GM12878 (cell line): ENCODE measurements at regions of chr5 and their contacts with region 1.

Region 1: DNA sequence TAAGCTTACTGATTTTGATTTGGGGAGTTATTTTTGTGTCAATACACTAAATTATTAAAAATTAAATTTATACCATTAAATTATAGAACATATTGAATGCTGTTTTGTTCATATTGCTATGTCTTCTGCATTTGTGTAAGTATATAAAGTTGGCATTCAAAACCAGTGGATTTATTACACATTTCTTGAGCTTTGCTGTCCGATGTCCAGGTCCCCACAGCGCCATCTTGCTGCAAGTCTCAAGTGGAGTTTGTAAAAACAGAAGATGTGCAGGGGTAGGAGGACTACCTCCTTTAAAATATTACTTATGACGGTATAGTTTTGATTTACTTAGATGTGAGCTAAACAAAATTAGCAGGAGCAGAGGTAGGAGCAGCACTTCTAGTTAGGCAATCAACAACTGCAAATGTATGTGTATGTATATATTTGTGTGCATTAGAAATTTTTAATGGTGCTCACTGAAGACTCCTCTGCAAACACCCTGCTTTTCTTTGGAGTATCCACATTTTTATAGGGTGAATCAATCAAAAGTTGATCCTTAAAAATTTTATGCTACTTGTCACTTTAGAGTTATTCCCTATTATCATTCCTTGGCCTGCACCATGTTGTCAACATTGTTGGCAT is 37.4 kb downstream of the CPEB4 start:
- DNase-seq: no peak
- ATAC-seq: peak; percentile 75
- H3K4me3 ChIP-seq: no peak overlapping the region
- H3K27ac ChIP-seq: peak overlapping the region; percentile 32; the same call in 1 of the 2 replicates
- H3K4me1 ChIP-seq: peaks cover 21% of the 10 kb centered on the region
- H3K27me3 ChIP-seq: no peaks in the 10 kb centered on the region
- CTCF ChIP-seq: peak; percentile 60 to 70 (median 63)
- EP300 ChIP-seq: no peak
- POLR2A ChIP-seq: no peak
- RAD21 ChIP-seq: peak; percentile 76

Region 2: DNA sequence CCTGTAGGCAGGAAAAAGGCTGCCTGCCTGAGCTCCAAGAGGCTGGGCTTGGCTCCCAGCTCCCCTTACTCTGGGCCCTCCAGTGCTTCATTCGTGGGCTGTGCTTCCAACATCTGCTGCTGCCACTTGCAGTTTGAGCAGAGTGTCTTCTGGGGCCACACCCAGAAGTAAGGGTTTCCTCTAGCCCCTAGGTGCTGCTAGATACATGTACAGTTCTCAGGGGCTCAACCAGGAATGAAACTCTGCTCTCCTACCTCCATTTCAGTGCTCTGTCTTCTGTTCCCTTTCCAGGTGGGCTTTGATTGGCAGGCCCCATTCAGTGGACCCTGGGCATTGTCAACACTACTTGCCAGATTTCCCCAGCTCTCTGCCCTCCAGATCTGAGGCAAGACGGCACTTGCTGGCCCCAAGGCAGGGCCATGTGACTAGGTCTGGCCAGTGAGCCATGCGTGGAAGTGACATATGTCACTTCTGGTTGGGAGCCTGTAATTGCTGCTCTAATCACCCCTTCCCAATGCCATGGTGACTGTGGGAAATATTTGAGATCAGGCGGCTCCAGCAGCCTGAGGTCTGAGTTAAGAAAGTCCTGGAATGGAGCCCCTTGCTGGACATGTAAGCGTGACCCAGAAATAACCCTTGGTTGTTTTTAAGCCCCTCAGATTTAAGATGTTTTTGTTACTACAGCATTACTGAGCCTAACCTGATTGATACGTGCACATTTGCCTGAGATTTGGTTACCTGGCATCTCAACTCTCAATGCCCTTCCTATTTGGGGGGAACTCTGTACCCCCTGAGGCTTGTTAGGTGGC is 299.7 kb before region 1 on chr5:
- CTCF ChIA-PET with region 1: interaction called, 267 read pairs
- POLR2A ChIA-PET with region 1: interaction called, 3 read pairs
- RAD21 ChIA-PET with region 1: interaction called, 58 read pairs
- SMC1A ChIA-PET with region 1: interaction called, 199 read pairs
- in situ Hi-C with region 1: loop called (anchors 5 kb)
- intact Hi-C with region 1: no loop called
- DNase-seq: no peak
- ATAC-seq: peak; percentile 81
- H3K4me3 ChIP-seq: no peak overlapping the region
- H3K27ac ChIP-seq: no peak overlapping the region
- H3K4me1 ChIP-seq: peaks cover 9% of the 10 kb centered on the region
- H3K27me3 ChIP-seq: no peaks in the 10 kb centered on the region
- CTCF ChIP-seq: peak; percentile 60 to 71 (median 61)
- EP300 ChIP-seq: no peak
- POLR2A ChIP-seq: no peak
- RAD21 ChIP-seq: peak; percentile 85

Region 3: DNA sequence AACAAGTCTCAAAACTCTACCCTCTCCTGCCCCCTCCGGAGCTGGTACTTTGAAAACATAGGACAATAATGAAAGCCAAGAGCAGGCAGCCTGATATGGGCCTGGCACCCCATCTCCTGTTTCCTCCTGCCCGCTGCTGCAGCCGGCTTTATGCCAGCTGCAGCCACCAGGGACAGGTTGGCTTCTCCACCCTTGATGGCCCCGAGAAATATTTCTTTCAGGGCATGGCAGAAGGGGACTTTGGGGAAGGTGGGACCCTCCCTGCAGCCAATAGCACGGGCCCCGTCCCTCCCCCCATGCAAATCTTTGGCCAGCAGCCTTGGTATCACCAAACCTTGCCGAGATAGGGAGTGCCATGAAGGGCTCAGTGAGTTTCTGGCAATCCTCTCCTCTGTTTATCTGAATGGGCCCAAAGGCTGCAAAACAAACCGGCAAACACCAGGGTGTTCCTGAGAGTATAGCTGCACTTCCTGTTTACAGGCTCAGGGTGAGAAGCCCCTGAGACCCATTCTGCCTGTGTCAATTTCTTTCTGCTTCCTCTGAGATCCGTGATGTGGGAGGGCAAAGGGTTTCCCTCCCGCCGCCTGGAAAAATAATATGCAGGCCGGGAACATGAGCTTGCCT is 235.7 kb before region 1 on chr5:
- CTCF ChIA-PET with region 1: interaction called, 3 read pairs
- POLR2A ChIA-PET with region 1: no interaction called
- RAD21 ChIA-PET with region 1: interaction called, 4 read pairs
- SMC1A ChIA-PET with region 1: interaction called, 3 read pairs
- in situ Hi-C with region 1: no loop called
- intact Hi-C with region 1: loop called (anchors 10 kb)
- DNase-seq: no peak
- ATAC-seq: peak; percentile 78
- H3K4me3 ChIP-seq: no peak overlapping the region
- H3K27ac ChIP-seq: peak overlapping the region; percentile 51
- H3K4me1 ChIP-seq: peaks cover 40% of the 10 kb centered on the region
- H3K27me3 ChIP-seq: no peaks in the 10 kb centered on the region
- CTCF ChIP-seq: peak in 2 of 3 experiments; percentile 26 to 33; a peak in 2 of 6 replicates
- EP300 ChIP-seq: no peak
- POLR2A ChIP-seq: no peak; the same call in 1 of the 2 replicates
- RAD21 ChIP-seq: no peak

Region 4: DNA sequence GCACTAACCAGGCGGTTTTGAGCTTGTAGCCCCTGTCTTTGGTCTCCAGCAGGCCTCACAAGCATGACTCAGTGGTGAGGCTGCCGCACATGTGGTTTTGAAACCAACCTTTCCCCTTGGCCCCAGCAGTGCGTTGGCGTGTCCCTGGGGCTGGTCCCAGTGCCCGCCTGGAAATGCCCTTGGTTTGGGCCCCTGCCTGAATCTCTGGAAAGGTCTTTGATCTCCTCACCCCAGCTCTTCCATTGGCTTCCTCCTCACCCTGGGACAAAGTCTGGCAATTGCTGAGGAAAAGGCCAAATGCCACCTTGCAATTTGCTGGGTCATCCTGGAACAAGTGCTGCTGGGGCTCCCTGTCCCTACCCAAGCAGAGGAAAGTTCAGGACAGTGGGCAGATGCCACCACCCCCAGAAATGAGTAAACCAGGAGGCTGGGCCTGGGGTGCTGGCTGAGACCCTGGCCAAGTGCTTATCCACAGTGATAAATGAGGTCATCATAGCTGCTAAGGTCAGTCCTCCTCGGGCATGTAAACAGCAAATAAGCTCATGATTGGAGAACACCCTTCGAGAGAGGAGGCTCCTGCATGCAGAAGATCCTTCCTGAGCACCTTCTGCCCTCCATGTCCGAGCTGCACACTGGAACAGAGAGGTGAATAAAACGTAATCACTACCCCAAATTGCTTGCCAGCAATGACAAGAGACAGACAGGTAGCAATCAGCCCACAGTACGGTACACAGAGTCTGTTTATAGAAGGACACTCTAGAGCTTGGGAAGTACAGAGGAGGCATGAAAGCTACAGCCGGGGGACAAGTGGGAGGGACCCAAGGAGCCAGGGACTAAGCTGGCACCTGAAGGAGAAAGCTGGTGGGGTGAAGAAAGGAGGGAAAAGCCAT is 136.3 kb before region 1 on chr5:
- CTCF ChIA-PET with region 1: interaction called, 53 read pairs
- POLR2A ChIA-PET with region 1: interaction called, 4 read pairs
- RAD21 ChIA-PET with region 1: interaction called, 51 read pairs
- SMC1A ChIA-PET with region 1: interaction called, 90 read pairs
- in situ Hi-C with region 1: no loop called
- intact Hi-C with region 1: no loop called
- DNase-seq: no peak
- ATAC-seq: peak; percentile 23; the same call in 2 of the 3 replicates
- H3K4me3 ChIP-seq: no peak overlapping the region
- H3K27ac ChIP-seq: no peak overlapping the region
- H3K4me1 ChIP-seq: peaks cover 50% of the 10 kb centered on the region
- H3K27me3 ChIP-seq: no peaks in the 10 kb centered on the region
- CTCF ChIP-seq: no peak
- EP300 ChIP-seq: no peak
- POLR2A ChIP-seq: no peak
- RAD21 ChIP-seq: no peak

Region 5: GRCh38 chr5:173887610-173888472 is 37.7 kb before region 1 on chr5 and contains the start of gene CPEB4:
- CTCF ChIA-PET with region 1: interaction called, 104 read pairs
- POLR2A ChIA-PET with region 1: interaction called, 16 read pairs
- RAD21 ChIA-PET with region 1: interaction called, 142 read pairs
- SMC1A ChIA-PET with region 1: interaction called, 361 read pairs
- in situ Hi-C with region 1: no loop called
- intact Hi-C with region 1: loop called (anchors 5 kb)
- DNase-seq: peak; percentile 99
- ATAC-seq: peak; percentile 90
- H3K4me3 ChIP-seq: peak within 1 kb of the TSS; percentile 94
- H3K27ac ChIP-seq: peak within 1 kb of the TSS; percentile 100
- H3K4me1 ChIP-seq: peaks cover 30% of the 10 kb centered on the region
- H3K27me3 ChIP-seq: no peaks in the 10 kb centered on the region
- CTCF ChIP-seq: no peak
- EP300 ChIP-seq: peak in 1 of 2 experiments; percentile 41; a peak in 1 of 4 replicates
- POLR2A ChIP-seq: peak; percentile 92
- RAD21 ChIP-seq: 0 out of 2 replicates have a peak, but pooled peaks have one; percentile 10
- polyA plus RNA-seq, gene CPEB4: 6.9 to 20.3 TPM

Region 6: GRCh38 chr5:173907686-173908371 is 17.7 kb before region 1 on chr5:
- CTCF ChIA-PET with region 1: interaction called, 71 read pairs
- POLR2A ChIA-PET with region 1: interaction called, 6 read pairs
- RAD21 ChIA-PET with region 1: interaction called, 27 read pairs
- SMC1A ChIA-PET with region 1: interaction called, 361 read pairs
- in situ Hi-C with region 1: no loop called
- intact Hi-C with region 1: no loop called
- DNase-seq: no peak
- ATAC-seq: peak; percentile 38
- H3K4me3 ChIP-seq: no peak overlapping the region
- H3K27ac ChIP-seq: peak overlapping the region; percentile 60
- H3K4me1 ChIP-seq: peaks cover 31% of the 10 kb centered on the region
- H3K27me3 ChIP-seq: no peaks in the 10 kb centered on the region
- CTCF ChIP-seq: no peak
- EP300 ChIP-seq: no peak
- POLR2A ChIP-seq: no peak
- RAD21 ChIP-seq: no peak